Right ventricle myocardium inferior (tissue), 1 donor: ENCODE measurements at regions of chr3 and their contacts with region 1.

Region 1: DNA sequence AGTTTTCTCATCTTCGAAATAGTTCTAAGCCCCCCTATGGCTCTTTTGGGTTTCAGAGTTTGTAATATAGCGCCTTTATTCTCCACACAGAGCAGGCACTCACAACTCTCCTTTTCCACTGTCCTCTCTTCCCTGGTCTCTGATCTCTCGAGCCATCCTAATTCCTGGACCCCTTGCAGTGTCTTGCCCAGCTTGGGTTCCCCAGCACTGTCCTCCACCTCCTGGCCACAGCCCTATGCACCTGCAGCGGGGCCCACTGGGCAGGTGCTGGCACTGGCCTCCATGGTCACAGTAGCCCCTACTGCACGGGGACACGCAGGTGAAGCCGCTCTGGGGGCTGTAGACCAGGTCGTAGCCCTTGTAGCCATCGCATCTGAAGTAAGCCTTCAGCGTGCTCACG is 27.9 kb downstream of the MUC20 start:
- DNase-seq: no peak
- ATAC-seq: no peak

Region 2: DNA sequence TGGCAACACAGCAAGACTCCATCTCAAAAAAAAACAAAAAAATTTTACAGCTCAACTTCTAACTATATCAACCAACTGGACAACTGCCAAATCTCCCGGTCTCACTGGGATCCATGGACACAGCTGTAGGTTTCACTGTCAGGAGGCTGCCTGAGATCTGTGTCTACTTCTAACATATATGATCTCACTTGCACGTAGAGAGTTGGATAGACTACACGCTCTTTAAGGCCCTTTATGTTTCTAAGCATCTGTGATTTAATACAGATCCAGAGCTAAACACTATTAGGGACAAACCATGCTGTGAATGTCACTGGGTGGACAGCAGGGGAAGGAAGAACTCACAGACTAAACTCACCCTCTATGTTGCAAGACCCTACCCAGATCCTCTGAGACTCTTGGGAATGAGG is 151.9 kb before region 1 on chr3:
- intact Hi-C with region 1: no loop called
- DNase-seq: no peak
- ATAC-seq: peak; percentile 49

Region 3: GRCh38 chr3:195616712-195617086 is 132.0 kb before region 1 on chr3:
- intact Hi-C with region 1: loop called (anchors 5 kb)
- DNase-seq: no peak
- ATAC-seq: peak; percentile 20

Region 4: DNA sequence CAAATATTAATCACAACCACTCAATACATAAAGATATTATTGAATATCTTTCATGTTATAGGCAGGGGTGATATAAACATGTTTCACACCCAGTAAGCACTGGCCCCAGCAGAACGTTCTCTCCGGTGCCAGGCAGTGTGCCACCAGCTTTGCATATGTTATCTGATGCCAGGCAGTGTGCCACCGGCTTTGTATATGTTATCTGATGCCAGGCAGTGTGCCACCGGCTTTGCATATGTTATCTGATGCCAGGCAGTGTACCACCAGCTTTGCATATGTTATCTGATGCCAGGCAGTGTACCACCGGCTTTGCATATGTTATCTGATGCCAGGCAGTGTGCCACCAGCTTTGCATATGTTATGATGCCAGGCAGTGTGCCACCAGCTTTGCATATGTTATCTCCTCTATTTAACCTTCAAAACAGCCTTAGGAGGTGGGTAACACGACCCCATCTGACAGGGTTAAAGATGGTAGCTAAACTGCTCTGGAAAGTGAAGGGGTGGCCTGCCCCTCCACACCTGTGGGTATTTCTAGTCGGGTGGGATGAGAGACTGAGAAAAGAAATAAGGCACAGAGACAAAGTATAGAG is 21.0 kb before region 1 on chr3:
- intact Hi-C with region 1: loop called (anchors 2 kb)
- DNase-seq: no peak
- ATAC-seq: no peak